Endothelial cell of umbilical vein (primary cell): ENCODE measurements at regions of chr14 and their contacts with region 1.

Region 1: GRCh38 chr14:24224618-24225071 is 7.5 kb downstream of the NEDD8 start:
- DNase-seq: peak; percentile 95
- H3K4me3 ChIP-seq: no peak overlapping the region
- H3K27ac ChIP-seq: peak overlapping the region; percentile 99
- H3K4me1 ChIP-seq: peaks cover 28% of the 10 kb centered on the region
- H3K27me3 ChIP-seq: no peaks in the 10 kb centered on the region
- CTCF ChIP-seq: no peak
- POLR2A ChIP-seq: no peak

Region 2: DNA sequence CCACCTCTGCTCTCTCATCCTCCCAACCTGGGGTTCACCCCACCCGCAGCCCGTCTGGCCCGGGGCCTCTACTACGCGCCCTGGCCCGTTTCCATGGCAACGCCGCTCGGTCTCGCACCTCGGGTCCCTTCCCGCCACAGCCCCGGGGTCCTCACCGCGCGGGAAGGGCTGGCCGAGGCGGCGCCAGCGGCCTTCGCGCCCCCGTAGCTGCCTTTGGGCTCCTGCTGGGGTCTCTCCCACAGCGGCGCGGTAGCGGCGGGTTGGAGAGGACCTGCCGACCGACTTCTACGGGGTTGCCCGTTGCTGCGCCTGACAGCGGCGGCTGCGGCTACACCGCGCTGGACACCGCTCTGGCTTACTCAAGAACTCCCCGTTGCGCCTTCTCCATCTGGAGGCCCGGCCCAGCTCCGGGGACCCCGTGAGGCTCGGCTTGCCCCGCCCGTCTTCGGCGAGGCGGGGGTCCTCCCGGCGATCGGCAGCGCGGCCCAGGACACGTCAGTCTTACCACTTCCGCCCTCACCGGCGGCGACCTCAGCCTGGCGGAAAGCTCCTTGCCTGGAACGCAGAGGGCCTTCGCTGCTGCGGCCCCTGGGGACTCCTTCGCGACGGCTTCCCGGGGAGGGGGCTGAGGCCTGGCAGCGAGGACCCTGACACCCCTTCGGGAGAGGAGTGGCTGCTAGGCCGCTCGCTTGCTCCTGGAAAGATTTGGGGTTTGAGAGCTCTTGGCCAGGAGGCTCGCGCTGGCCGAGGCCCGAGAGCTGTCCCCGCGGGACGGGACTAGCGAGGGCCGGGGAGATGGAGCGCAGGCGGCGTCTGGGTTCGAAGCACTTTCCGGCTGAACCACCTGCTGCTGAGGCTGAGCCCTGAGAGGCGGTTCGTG is 29.2 kb before region 1 on chr14 and contains the start of gene TM9SF1:
- CTCF ChIA-PET with region 1: interaction called, 3 read pairs
- POLR2A ChIA-PET with region 1: no interaction called
- dilution Hi-C with region 1: no loop called
- intact Hi-C with region 1: loop called (anchors 1 kb)
- DNase-seq: peak; percentile 93
- H3K4me3 ChIP-seq: peak within 1 kb of the TSS; percentile 36 to 82 (median 69)
- H3K27ac ChIP-seq: peak within 1 kb of the TSS; percentile 93
- H3K4me1 ChIP-seq: peaks cover 16% of the 10 kb centered on the region
- H3K27me3 ChIP-seq: no peaks in the 10 kb centered on the region
- CTCF ChIP-seq: no peak
- POLR2A ChIP-seq: no peak
- total RNA-seq, gene TM9SF1: 58.5 and 60.7 TPM in 2 replicates

Region 3: GRCh38 chr14:24271134-24271833 is 46.6 kb after region 1 on chr14 and contains the start of gene RABGGTA:
- CTCF ChIA-PET with region 1: interaction called, 3 read pairs
- POLR2A ChIA-PET with region 1: no interaction called
- dilution Hi-C with region 1: no loop called
- intact Hi-C with region 1: loop called (anchors 1 kb)
- DNase-seq: peak; percentile 79
- H3K4me3 ChIP-seq: peak within 1 kb of the TSS; percentile 58 to 77 (median 65)
- H3K27ac ChIP-seq: peak within 1 kb of the TSS; percentile 92
- H3K4me1 ChIP-seq: peaks cover 9% of the 10 kb centered on the region
- H3K27me3 ChIP-seq: no peaks in the 10 kb centered on the region
- CTCF ChIP-seq: peak; percentile 74 to 85
- POLR2A ChIP-seq: peak; percentile 81
- total RNA-seq, gene RABGGTA: 29.3 and 29.5 TPM in 2 replicates

Region 4: DNA sequence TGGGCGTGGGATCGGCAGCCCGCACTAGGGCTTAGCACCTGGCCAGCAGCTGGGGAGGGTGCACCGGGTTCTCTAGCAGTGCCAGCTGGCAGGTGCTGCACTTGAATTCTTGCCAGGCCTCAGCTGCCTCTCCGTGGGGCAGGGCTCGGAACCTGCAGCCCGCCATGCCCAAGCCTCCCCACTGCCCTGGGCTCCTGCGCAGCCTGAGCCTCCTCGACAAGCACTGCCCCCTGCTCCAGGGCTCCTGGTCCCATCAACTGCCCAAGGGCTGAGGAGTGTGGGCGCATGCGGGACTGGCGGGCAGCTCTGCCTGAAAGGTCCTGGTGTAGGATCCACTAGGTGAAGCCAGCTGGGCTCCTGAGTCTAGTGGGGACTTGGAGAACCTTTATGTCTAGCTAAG is 248.6 kb after region 1 on chr14:
- CTCF ChIA-PET with region 1: no interaction called
- POLR2A ChIA-PET with region 1: no interaction called
- dilution Hi-C with region 1: no loop called
- intact Hi-C with region 1: no loop called
- DNase-seq: no peak
- H3K4me3 ChIP-seq: no peak overlapping the region
- H3K27ac ChIP-seq: no peak overlapping the region
- H3K4me1 ChIP-seq: no peaks in the 10 kb centered on the region
- H3K27me3 ChIP-seq: no peaks in the 10 kb centered on the region
- CTCF ChIP-seq: no peak
- POLR2A ChIP-seq: no peak

Region 5: DNA sequence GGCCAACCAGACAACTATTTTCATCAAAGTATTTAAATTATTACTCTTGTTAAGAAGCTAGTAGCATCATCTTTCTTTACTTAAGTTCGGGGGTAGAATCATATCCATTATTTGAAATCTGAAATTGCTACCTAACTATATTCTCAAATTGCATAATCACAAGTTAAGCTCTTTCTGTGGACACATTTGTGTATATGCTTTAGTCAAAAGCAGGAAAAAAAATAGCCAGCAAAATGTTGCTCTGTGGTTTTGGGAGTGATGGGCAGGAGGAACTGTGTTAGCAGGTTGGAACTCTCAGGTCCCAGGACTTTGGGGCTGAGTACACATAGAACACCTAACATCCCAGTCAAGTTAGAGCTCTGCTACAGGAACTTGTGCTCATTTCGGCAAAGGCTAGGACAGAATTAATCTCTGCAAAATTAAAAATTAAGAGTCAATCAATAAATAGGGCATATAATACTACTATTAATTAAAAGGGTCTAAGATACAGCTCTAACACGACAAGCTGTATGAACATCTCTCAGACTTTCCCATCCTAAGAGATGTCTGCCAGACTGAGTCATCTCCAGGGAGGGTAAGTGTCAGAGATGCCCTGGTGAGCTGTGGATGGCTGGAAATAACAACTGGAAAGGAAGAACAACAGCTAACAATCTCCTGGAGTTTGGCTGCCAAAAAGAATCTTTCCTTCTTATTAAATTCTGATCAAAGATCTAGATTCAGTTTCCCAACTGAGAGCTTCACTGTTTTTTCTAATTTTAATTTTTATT is 612.8 kb after region 1 on chr14:
- CTCF ChIA-PET with region 1: no interaction called
- POLR2A ChIA-PET with region 1: no interaction called
- dilution Hi-C with region 1: no loop called
- intact Hi-C with region 1: no loop called
- DNase-seq: no peak
- H3K4me3 ChIP-seq: no peak overlapping the region
- H3K27ac ChIP-seq: no peak overlapping the region
- H3K4me1 ChIP-seq: no peaks in the 10 kb centered on the region
- H3K27me3 ChIP-seq: no peaks in the 10 kb centered on the region
- CTCF ChIP-seq: no peak
- POLR2A ChIP-seq: no peak